Endothelial cell of umbilical vein (primary cell): ENCODE measurements at regions of chr6 and their contacts with region 1.

Region 1: DNA sequence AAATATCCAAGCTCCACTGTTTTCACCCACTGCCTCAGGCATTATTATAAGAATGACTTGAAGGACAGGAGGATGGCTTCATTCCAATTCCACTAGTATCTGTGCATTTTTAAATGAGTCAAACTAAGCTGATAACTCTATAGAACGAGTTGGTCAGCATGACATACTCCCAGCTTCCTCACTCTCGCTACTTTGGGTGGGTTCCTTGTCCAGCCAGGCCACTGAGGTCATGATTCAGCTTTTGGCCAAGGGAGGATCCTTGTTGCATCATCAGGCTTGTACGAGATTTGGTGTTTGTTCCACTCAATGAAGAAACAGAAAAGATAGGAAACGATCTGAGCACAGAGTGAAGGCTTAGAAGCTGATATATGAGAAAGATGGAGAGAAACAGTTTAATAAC is 19.8 kb downstream of the NEDD9 start:
- DNase-seq: peak; percentile 71
- H3K4me3 ChIP-seq: no peak overlapping the region
- H3K27ac ChIP-seq: peak overlapping the region; percentile 77
- H3K4me1 ChIP-seq: peaks cover 95% of the 10 kb centered on the region
- H3K27me3 ChIP-seq: no peaks in the 10 kb centered on the region
- CTCF ChIP-seq: no peak
- POLR2A ChIP-seq: no peak

Region 2: DNA sequence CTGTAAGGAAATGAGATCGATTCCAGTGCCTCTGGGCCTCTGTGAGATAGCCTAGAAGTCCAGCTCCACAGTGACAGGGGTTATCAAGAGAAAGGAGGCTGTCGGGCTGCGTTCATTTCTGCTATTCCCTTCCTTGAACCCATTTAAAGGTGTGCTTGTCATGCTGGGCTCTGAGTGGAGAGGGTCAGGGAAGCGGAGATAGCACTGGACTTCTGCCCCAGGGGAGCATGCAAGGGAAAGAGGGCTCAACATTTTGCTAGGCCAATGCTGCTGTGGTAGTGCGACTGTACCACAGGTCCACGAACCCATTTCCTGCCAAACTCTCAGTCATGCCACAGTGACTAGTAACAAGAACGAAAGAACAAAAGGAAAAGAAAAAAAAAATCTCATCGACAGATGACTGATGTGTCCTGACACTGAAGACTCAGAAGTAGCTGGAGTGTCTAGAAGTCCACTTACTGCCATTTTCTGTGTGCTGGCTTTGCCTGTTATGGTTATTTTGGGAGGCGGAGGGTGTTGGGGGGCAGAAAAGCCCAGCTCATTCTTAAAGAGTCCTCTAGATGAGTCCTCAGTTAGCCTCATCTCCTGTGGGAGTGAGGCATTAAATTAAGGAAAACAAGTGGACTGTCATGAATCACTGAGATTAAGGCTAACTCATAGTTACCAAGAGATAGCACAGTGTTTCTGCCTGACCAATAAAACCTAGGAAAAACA is 11.8 kb after region 1 on chr6:
- CTCF ChIA-PET with region 1: interaction called, 18 read pairs
- POLR2A ChIA-PET with region 1: interaction called, 4 read pairs
- dilution Hi-C with region 1: no loop called
- intact Hi-C with region 1: no loop called
- DNase-seq: peak; percentile 72
- H3K4me3 ChIP-seq: no peak overlapping the region
- H3K27ac ChIP-seq: peak overlapping the region; percentile 81
- H3K4me1 ChIP-seq: peaks cover 74% of the 10 kb centered on the region
- H3K27me3 ChIP-seq: no peaks in the 10 kb centered on the region
- CTCF ChIP-seq: no peak
- POLR2A ChIP-seq: no peak